Right ventricle myocardium superior (tissue), 1 donor: ENCODE measurements at regions of chr4 and their contacts with region 1.

Region 1: DNA sequence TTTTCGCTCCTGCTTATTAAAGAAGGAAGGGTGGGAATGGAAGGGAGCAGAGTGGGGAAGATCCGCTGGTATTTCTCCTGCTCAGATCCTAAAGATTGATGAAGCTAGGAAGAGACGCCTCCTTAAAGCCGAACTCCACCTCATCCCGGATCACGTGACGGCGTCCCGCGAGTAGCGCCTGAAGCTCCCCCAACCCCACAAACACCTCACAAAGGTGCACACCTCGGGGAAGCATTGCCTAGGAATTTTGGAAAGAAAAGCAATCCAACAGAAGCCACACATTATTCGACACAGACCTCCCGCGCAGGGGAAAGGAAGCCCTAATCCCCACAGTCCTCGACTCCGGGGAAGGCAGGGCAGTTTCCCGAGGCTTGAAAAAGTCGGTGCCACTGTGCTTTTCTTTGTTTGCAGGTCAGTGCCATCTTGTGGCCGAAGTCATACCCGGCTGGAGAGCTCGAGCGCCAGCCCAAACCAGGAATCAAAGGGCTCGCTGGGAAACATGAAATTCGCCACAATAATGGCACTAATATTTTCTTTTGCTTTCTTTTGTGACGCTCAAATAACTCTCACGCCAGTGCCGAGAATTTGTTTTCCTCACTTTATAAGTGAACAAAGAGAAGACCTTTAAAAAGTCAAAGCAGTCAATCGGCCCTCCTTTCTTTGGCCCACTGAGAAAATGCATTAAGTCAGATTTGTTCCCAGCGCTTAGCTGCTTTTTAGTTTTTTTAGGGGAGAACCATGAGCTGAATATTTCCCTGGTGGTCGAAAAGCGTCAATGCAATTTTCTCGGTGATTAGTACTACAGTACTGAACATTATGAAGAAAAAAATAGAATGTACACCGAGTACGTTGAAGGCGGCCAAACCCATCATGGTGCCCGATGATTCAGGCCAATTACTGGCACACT is at the start of gene NPY1R:
- DNase-seq: peak; percentile 65
- ATAC-seq: peak; percentile 98
- total RNA-seq, gene NPY1R: 0.62 TPM

Region 2: GRCh38 chr4:162497564-162498167 is 835.1 kb before region 1 on chr4:
- intact Hi-C with region 1: loop called (anchors 10 kb)
- DNase-seq: no peak
- ATAC-seq: peak; percentile 93

Region 3: GRCh38 chr4:162972661-162973330 is 360.0 kb before region 1 on chr4:
- intact Hi-C with region 1: no loop called
- DNase-seq: no peak
- ATAC-seq: no peak